Activated CD8-positive, alpha-beta T cell treated with anti-CD3 and anti-CD28 coated beads, Interleukin-2, amount 10 ng/mL, durations not matched to agents 7 days and 5 days (primary cell): ENCODE measurements at regions of chr17 and their contacts with region 1.

Region 1: DNA sequence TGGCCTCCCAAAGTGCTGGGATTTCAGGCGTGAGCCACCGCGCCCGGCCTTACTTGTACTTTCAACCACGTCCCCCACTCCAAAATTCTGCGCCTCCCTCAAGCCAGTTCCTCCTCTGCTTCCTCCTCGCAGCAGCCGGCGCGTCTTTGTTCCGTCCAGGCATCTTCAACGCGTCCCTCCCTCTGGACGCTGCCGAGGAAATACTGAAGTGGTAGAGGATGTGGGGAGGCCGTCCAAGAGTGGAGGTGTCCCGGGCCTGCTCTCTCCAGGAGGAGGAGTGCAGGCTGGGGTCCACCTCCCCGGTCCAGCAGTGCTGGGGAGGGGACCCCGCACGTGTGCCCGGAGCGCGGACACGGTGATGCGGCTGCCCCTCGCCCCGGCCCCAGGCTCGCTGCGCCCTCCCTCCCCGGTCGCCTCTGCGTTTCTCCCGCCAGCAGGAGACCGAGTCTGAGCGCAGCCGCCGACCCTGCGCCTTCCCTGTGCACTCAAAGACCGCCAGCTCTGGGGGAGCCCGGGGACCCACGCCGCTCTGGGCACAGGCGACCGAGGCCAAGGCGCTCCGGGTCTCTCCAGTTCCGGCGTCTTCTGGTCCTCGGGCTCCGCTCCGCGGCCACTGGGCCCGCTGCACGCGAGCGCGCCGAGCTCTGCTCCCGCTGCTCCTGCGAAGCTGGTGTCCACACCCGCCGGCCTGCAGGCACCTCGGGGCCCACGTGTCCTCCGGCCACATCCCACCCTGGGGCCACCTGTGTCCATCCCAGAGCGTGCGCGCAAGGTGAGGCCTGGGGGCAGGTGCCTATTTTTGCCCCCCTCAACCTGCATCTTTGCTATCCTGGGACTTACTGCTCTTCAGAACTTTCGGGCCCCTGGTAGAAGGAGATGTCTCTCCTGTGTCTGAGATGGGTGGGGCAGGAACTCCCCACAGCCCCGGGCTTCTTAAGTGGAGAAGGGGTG is 31.7 kb downstream of the OSBPL7 start:
- DNase-seq: peak; percentile 61
- ATAC-seq: peak; percentile 90
- H3K4me3 Mint-ChIP-seq: peak overlapping the region; percentile 57
- H3K27ac Mint-ChIP-seq: no peak overlapping the region
- H3K4me1 Mint-ChIP-seq: peaks cover 10% of the 10 kb centered on the region
- H3K27me3 Mint-ChIP-seq: peaks cover 48% of the 10 kb centered on the region

Region 2: DNA sequence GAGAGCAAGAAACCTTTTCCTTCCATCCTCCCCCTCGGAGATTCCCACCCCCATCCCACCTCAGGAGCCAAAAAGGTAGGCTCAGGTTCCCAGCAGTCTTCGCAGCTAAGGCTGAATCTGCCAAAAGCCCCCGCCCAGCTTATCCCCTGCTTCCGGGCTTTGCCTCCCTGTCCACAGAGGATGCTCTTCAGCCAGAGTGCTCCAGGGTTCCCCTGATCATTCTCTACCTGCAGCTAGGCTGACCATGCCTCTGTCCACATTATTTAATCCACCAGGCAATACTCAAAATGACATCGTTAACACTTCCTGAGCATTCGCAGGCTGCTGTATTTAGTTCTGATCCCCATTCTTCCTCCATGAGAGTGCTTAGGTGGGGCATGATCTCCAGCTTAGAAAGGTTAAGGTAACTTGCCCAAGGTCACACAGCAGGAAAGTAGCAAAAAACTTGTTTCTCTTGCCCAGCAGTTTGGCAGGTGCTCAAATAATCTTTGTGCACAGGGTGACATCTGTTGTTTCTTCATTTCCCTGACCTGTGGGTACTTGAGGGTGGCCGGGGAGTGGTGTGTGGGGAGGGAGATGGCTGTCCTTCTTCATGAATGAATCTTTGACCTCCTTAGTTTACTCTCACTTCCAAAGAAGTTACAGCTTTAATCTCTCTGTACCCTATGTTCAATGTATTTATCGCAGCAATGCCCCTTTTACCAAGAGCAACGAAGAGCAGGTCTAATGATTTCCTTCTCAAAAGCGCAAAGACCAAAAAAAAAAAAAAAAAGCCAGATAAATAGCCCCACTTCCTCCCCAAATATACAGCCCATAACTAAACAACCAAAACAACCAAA is 96.8 kb before region 1 on chr17:
- CTCF ChIA-PET with region 1: interaction called, 12 read pairs
- POLR2A ChIA-PET with region 1: no interaction called
- DNase-seq: no peak
- ATAC-seq: no peak
- H3K4me3 Mint-ChIP-seq: peak overlapping the region; percentile 77
- H3K27ac Mint-ChIP-seq: peak overlapping the region; percentile 46
- H3K4me1 Mint-ChIP-seq: peaks cover 27% of the 10 kb centered on the region
- H3K27me3 Mint-ChIP-seq: no peaks in the 10 kb centered on the region

Region 3: GRCh38 chr17:47941236-47941994 is 151.5 kb after region 1 on chr17 and contains the start of gene PNPO:
- CTCF ChIA-PET with region 1: no interaction called
- POLR2A ChIA-PET with region 1: no interaction called
- DNase-seq: peak; percentile 99
- ATAC-seq: peak; percentile 99
- H3K4me3 Mint-ChIP-seq: peak within 1 kb of the TSS; percentile 85
- H3K27ac Mint-ChIP-seq: peak within 1 kb of the TSS; percentile 90
- H3K4me1 Mint-ChIP-seq: peaks cover 52% of the 10 kb centered on the region
- H3K27me3 Mint-ChIP-seq: no peaks in the 10 kb centered on the region
- total RNA-seq, gene PNPO: 37.9 to 44.0 TPM